ENCODE measurements at regions of chr7 and their contacts with region 1.

Region 1: GRCh38 chr7:72924733-72925545 is at the start of gene POM121:
- DNase-seq: peak; percentile 49 to 79
- ATAC-seq: peak; percentile 91 to 94
- H3K4me3 ChIP-seq: peak within 1 kb of the TSS; percentile 58 to 93 (median 90)
- H3K27ac ChIP-seq: peak within 1 kb of the TSS; percentile 81 to 95 (median 88)
- H3K4me1 ChIP-seq: peaks cover 19 to 22% of the 10 kb centered on the region in 2 donors
- H3K27me3 ChIP-seq: no peaks in the 10 kb centered on the region
- CTCF ChIP-seq: peak in 2 of 5 experiments; percentile 25 to 34
- POLR2A ChIP-seq: peak; percentile 75 to 77
- total RNA-seq, gene POM121: 7.8 to 11.5 (median 10.0) TPM

Region 2: GRCh38 chr7:72493850-72494661 is 430.9 kb before region 1 on chr7:
- in situ Hi-C with region 1: no loop called
- intact Hi-C with region 1: no loop called
- DNase-seq: no peak
- ATAC-seq: no peak
- H3K4me3 ChIP-seq: no peak overlapping the region
- H3K27ac ChIP-seq: no peak overlapping the region
- H3K4me1 ChIP-seq: no peaks in the 10 kb centered on the region
- H3K27me3 ChIP-seq: no peaks in the 10 kb centered on the region
- CTCF ChIP-seq: peak in 2 of 5 experiments; percentile 52 to 60
- POLR2A ChIP-seq: no peak

Region 3: DNA sequence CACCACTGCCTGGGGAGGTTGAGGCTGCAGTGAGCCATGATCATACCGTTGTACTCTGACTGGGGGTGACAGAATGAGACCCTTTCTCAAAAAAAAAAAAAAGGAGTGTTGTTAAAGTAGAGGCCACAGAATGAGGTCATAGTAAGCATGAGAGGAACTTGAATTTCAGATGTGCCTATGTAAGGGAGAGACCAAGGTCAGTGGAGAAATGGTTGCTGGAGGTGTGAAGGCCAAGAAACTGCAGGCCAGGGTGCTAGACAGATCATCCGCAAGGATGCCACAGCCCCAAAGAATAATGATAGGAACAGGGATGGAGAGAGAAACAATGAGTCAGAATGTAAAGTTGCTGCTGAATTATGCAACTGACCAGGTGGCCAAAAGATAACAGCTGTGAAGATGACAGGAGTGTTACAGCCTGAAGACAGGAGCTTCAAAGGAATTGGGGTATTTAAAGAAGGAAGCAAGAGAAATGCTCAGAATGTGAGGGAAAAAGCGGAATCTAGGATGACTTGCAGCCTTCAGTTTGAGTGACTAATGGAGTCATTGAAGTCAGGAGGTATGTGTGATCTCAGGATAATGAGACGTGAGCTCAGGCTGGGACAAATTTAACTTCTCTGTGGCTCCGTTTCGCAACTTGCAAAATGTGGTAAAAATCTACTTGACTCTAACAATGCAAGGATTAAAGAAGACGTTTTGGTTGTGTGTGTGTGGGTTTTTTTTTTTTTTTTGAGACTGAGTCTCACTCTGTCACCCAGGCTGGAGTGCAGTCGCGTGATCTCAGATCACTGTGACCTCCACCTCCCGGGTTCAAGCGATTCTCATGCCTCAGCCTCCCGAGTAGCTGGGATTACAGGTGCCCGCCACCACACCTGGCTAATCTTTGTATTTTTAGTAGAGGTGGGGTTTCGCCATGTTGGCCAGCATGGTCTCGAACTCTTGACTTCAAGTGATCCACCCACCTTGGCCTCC is 119.1 kb before region 1 on chr7:
- in situ Hi-C with region 1: loop called in 1 of 4 experiments (anchors 25 kb)
- intact Hi-C with region 1: no loop called
- DNase-seq: no peak
- ATAC-seq: peak; percentile 19 to 60
- H3K4me3 ChIP-seq: no peak overlapping the region
- H3K27ac ChIP-seq: no peak overlapping the region
- H3K4me1 ChIP-seq: no peaks in the 10 kb centered on the region
- H3K27me3 ChIP-seq: no peaks in the 10 kb centered on the region
- CTCF ChIP-seq: no peak
- POLR2A ChIP-seq: no peak

Region 4: DNA sequence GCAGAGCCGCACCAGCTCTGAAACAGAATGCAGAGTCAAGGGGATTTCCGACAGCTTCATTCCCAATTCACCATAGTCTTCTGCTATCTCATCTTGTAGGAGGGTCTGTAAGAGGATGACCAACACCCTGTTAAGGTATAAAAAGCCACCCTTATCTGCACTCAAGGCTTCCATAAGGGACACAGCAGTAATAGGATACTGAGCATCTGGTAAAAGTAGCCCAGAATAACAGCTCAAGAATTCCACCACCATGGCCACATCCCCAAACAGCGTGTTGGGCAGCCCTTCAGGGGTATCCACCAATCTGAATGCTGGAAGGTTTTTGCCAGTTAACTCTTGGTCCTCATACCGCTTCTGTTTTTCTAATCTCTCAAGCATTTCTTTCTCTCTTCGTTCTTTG is 552.4 kb after region 1 on chr7:
- in situ Hi-C with region 1: no loop called
- intact Hi-C with region 1: no loop called
- DNase-seq: no peak
- ATAC-seq: no peak
- H3K4me3 ChIP-seq: no peak overlapping the region
- H3K27ac ChIP-seq: no peak overlapping the region
- H3K4me1 ChIP-seq: peaks cover 5 to 11% of the 10 kb centered on the region in 2 donors
- H3K27me3 ChIP-seq: no peaks in the 10 kb centered on the region
- CTCF ChIP-seq: no peak
- POLR2A ChIP-seq: no peak

Measured in gastrocnemius medialis (tissue), 4 donors.